Activated CD4-positive, alpha-beta memory T cell treated with anti-CD3 and anti-CD28 coated beads, Interleukin-2, amount 10 ng/mL, durations not matched to agents 7 days and 5 days (primary cell): ENCODE measurements at regions of chr9 and their contacts with region 1.

Region 1: DNA sequence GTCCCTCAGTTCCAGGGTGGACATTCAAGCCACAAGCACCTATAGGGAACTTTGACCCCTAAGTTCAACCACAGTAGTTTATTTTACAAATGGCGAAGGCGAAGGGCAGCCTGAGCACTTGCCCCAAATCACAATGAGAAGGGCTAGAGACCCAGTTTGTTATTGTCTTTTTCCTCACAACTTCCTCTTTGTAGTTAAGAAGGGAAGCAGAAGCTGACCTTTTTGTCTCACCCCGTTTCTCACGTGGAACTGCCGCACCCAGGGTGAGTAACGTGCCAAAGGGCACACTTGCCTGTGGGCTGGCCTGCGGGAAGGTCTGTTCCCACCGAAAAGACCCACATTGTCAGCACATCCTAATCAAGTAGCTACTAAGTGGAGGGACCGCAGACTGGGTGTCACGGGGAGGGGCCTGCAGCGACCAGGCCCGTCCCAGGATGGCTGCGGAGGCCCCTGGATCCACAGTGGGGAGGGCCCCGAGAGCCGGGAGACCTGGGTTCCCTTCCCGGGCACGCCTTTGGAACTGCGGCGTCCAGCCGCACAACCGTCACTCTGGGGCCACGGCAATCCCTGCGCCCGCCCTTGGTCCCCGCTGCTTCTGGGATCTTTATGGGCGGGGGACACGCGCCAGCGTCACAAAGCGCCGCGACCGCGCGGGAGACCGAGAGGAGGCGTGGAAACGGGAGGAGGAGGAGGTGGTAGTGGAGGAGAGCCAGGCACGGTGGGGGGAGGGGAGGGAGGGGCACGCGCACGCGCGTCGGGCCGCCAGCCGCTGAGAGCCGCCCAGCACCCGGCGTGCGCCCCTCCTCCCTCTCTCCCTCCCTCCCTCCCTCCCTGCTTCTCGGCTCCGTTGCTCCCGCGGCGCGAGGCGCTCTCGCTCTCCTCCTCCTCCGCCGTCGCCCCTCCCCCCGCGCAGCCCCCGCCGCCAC is at the start of gene UBE2R2:
- DNase-seq: peak; percentile 93
- H3K4me3 Mint-ChIP-seq: peak within 1 kb of the TSS; percentile 97
- H3K27ac Mint-ChIP-seq: peak within 1 kb of the TSS; percentile 97
- H3K4me1 Mint-ChIP-seq: peaks cover 62% of the 10 kb centered on the region
- H3K27me3 Mint-ChIP-seq: peaks cover 8% of the 10 kb centered on the region
- total RNA-seq, gene UBE2R2: 35.8 to 37.7 TPM

Region 2: DNA sequence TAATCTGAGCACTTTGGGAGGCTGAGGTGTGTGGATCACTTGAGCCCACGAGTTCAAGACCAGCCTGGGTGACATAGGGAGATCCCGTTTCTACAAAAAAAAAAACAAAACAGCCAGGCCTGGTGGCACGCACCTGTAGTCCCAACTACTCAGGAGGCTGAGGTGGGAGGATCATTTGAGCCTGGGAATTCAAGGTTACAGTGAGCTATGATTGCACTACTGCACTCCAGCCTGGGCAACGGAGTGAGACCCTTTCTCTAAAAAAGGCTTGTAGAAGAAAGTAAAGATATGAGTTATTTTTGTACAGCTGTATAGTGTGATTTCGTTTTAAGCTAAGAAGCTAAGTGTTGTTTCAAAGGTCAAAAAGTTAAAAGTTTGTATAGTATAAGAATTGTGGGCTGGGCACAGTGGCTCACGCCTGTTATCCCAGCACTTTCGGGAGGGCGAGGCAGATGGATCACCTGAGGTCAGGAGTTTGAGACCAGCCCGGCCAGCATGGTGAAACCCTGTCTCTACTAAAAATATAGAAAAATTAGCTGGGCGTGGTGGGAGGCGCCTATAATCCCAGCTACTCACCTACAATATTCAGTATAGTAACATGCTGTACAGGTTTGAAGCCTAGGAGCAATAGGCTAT is 19.2 kb after region 1 on chr9:
- CTCF ChIA-PET with region 1: interaction called, 11 read pairs
- POLR2A ChIA-PET with region 1: interaction called, 7 read pairs
- DNase-seq: no peak
- H3K4me3 Mint-ChIP-seq: no peak overlapping the region
- H3K27ac Mint-ChIP-seq: no peak overlapping the region
- H3K4me1 Mint-ChIP-seq: peaks cover 16% of the 10 kb centered on the region
- H3K27me3 Mint-ChIP-seq: no peaks in the 10 kb centered on the region

Region 3: DNA sequence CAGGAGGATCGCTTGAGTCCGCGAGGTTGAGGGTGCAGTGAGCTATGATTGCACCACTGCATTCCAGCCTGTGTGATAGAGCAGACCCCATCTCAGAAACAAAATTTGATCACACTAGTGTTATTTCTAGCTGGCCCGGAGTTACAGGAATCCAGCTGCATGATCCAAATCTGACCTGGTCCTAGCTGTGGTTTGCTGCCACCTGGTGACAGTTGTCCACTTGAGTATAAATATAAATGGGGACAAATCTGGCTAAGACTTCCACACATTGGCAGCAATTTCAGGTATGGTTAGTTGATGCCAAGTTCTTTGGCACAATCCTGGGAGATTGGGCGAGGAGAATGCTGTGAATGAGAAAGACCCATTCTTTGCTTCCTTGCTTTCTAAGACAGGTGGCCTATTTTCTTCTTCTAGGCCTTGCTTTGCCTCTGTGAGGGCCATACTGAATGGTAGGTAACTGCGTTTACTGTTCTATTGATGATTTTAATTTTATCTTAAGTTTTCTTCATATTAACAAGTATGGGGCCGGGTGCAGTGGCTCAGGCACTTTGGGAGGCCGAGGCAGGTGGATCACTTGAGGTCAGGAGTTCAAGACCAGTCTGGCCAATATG is 35.7 kb after region 1 on chr9:
- CTCF ChIA-PET with region 1: interaction called, 43 read pairs
- POLR2A ChIA-PET with region 1: interaction called, 4 read pairs
- DNase-seq: peak; percentile 46
- H3K4me3 Mint-ChIP-seq: no peak overlapping the region
- H3K27ac Mint-ChIP-seq: no peak overlapping the region
- H3K4me1 Mint-ChIP-seq: peaks cover 14% of the 10 kb centered on the region
- H3K27me3 Mint-ChIP-seq: no peaks in the 10 kb centered on the region

Region 4: GRCh38 chr9:33858346-33858885 is 41.8 kb after region 1 on chr9:
- CTCF ChIA-PET with region 1: interaction called, 43 read pairs
- POLR2A ChIA-PET with region 1: interaction called, 3 read pairs
- DNase-seq: no peak
- H3K4me3 Mint-ChIP-seq: no peak overlapping the region
- H3K27ac Mint-ChIP-seq: no peak overlapping the region
- H3K4me1 Mint-ChIP-seq: peaks cover 16% of the 10 kb centered on the region
- H3K27me3 Mint-ChIP-seq: no peaks in the 10 kb centered on the region

Region 5: DNA sequence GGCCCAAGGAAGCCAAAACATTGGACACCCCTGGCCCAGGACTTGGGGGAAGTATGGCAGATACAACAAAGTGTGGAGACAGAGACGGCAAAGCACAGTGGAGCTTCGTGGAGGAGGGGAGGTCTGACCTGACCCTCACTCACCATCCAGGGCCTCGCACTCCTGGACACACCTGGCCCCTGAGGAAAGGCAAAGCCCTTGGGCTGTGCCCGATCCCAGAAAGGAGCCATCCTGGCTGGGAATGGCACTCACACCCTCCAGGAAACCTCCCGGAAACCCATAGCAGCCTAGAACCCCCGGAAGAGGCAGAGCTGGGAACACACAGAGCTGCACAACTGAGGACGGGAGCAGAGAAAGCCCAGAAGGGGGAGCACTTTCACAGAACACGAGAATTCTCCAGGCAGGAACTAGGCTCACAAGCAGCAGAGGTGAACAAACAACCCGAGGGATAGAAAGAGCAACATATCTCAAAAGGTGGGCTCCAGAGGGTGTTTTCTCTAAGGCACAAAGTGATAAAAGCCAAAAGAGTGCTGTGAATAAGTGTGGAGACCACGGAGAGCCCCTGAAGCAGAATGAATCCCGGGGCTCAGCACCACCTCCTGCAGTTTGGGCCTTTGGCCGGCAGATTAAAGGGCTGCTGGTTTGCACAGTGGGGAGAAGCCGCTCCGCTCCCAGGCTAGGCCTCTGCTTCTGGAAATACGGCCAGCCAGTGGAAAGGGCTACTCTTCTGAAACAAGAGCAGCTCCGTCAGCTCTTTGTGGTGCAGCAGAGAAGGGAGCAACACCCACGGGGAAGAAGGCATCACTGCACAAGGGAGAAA is 108.6 kb after region 1 on chr9:
- CTCF ChIA-PET with region 1: interaction called, 10 read pairs
- POLR2A ChIA-PET with region 1: interaction called, 3 read pairs
- DNase-seq: peak; percentile 28
- H3K4me3 Mint-ChIP-seq: no peak overlapping the region
- H3K27ac Mint-ChIP-seq: no peak overlapping the region
- H3K4me1 Mint-ChIP-seq: no peaks in the 10 kb centered on the region
- H3K27me3 Mint-ChIP-seq: no peaks in the 10 kb centered on the region

Region 6: GRCh38 chr9:34048923-34049697 is 232.5 kb after region 1 on chr9:
- CTCF ChIA-PET with region 1: interaction called, 4 read pairs
- POLR2A ChIA-PET with region 1: interaction called, 12 read pairs
- DNase-seq: peak; percentile 97
- H3K4me3 Mint-ChIP-seq: peak overlapping the region; percentile 89
- H3K27ac Mint-ChIP-seq: peak overlapping the region; percentile 97
- H3K4me1 Mint-ChIP-seq: peaks cover 58% of the 10 kb centered on the region
- H3K27me3 Mint-ChIP-seq: no peaks in the 10 kb centered on the region

Region 7: GRCh38 chr9:34072868-34073590 is 256.4 kb after region 1 on chr9:
- CTCF ChIA-PET with region 1: interaction called, 22 read pairs
- POLR2A ChIA-PET with region 1: no interaction called
- DNase-seq: no peak
- H3K4me3 Mint-ChIP-seq: no peak overlapping the region
- H3K27ac Mint-ChIP-seq: no peak overlapping the region
- H3K4me1 Mint-ChIP-seq: peaks cover 11% of the 10 kb centered on the region
- H3K27me3 Mint-ChIP-seq: peaks cover 2% of the 10 kb centered on the region